WTC11 (cell line): ENCODE measurements at regions of chr6 and their contacts with region 1.

Region 1: GRCh38 chr6:19836799-19837510 is at the start of gene ID4:
- DNase-seq: peak; percentile 97
- ATAC-seq: peak; percentile 84
- H3K4me3 Mint-ChIP-seq: peak within 1 kb of the TSS; percentile 88
- H3K27ac Mint-ChIP-seq: peak within 1 kb of the TSS; percentile 97
- H3K4me1 Mint-ChIP-seq: peaks cover 39% of the 10 kb centered on the region
- H3K27me3 Mint-ChIP-seq: peaks cover 50% of the 10 kb centered on the region
- CTCF ChIP-seq: no peak
- total RNA-seq, gene ID4: 4.5 to 9.3 TPM (median 8.8 TPM) in 3 replicates

Region 2: DNA sequence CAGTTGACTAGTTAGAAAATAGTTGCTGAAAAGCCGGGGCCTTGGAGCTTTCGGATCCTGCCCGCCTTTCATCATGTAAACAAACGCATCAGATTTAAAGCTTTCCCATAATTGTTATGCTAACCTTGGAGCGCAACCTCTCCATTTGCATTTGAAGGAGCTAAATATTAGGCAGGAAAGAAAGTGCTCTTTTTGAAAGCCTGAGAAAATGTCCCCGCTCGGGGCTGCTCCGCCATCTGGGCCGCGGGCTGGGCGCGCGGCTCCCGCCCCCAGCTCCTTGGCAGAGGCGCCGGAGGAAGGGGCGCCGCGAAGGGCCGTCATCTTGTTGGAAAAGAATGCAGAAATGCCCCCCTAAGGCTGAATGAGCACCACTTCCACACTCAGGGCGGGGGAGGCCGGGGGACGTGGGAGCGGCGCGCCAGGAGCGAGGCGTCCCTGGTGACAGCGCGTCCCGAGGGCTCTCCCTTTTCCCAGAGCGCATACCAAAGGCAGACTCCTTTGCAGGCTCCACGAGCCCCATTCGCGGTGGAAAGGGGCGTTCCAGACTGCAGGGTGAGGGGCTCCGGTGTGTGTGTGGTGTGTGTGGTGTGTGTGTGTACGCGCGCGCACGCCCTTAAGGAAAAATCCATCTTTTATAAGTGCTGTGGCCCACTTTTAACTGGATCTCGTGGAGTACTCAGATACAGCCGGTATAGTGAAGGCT is 145.3 kb before region 1 on chr6:
- CTCF ChIA-PET with region 1: interaction called, 4 read pairs
- POLR2A ChIA-PET with region 1: interaction called, 11 read pairs
- DNase-seq: peak; percentile 71
- ATAC-seq: peak; percentile 83
- H3K4me3 Mint-ChIP-seq: peak overlapping the region; percentile 77
- H3K27ac Mint-ChIP-seq: peak overlapping the region; percentile 96
- H3K4me1 Mint-ChIP-seq: peaks cover 49% of the 10 kb centered on the region
- H3K27me3 Mint-ChIP-seq: no peaks in the 10 kb centered on the region; the same call in 1 of the 2 replicates
- CTCF ChIP-seq: no peak

Region 3: GRCh38 chr6:19804205-19805123 is 32.5 kb before region 1 on chr6:
- CTCF ChIA-PET with region 1: interaction called, 4 read pairs
- POLR2A ChIA-PET with region 1: interaction called, 21 read pairs
- DNase-seq: peak; percentile 96
- ATAC-seq: peak; percentile 92
- H3K4me3 Mint-ChIP-seq: peak overlapping the region; percentile 81
- H3K27ac Mint-ChIP-seq: peak overlapping the region; percentile 76
- H3K4me1 Mint-ChIP-seq: peaks cover 20% of the 10 kb centered on the region
- H3K27me3 Mint-ChIP-seq: peaks cover 27% of the 10 kb centered on the region
- CTCF ChIP-seq: no peak

Region 4: DNA sequence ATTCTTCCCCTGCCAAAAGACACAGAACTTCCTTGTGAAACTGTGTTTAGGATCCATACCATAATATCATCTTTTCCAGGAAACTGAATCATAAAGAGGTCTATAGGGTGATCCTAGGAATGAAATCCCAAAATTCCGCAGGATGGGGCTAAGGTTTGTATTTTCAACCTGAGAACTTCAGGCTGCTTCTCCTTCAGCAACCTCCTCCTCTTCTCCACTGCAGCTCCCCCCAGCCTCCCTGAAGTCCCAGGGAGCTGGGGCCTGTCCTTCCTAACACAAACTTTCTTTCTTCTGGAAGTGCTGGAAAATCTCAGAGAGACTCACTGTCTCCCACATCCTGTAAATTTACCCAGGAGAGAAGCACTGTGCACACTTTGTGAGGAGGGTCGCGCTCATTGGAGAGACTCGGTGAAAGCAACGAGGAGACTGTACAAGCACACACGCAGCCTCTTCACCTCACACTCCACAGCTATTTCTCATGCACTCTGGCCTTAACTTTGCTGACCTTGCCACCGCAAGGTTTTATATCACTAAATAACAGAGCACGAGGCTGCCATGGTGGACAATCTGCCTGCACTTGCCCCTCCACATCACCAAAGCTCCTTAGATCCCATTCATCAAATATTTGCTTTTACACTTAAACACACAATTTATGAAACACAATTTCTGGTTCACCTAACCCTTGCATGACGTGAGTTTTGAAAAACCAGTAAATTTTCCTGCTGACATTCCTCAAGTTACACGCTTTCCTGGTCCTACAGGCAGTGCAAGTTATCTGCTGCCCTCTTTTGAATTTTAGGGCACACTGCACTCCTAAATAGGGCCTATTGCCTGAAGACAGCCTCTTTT is 14.5 kb after region 1 on chr6:
- CTCF ChIA-PET with region 1: interaction called, 7 read pairs
- POLR2A ChIA-PET with region 1: interaction called, 13 read pairs
- DNase-seq: peak; percentile 38
- ATAC-seq: peak; percentile 99
- H3K4me3 Mint-ChIP-seq: 0 out of 2 replicates have a peak overlapping the region, but pooled peaks have one; percentile 28
- H3K27ac Mint-ChIP-seq: peak overlapping the region; percentile 78
- H3K4me1 Mint-ChIP-seq: peaks cover 8% of the 10 kb centered on the region
- H3K27me3 Mint-ChIP-seq: no peaks in the 10 kb centered on the region
- CTCF ChIP-seq: peak; percentile 46; the same call in 1 of the 2 replicates